Naive thymus-derived CD4-positive, alpha-beta T cell (primary cell): ENCODE measurements at regions of chr12 and their contacts with region 1.

Region 1: DNA sequence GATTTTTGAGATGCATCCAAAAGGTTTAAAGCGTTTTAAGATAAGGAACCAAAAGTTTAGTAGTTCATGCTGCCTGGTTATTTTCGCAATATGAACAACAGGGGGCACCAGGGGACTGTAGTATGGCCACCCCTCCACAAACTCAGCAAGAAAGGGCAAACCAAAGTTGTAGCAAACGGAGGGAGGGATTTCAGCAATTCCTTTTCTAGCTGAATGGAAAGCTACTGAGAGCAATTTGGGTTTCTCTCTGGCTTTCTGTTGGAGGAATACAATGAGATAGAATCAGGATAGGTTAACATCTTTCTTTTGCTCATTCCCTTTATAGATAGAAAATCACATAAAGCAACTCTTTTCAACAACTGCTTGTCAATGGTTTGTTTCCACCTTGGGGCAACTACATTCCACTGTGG is 62.5 kb downstream of the DRAM1 start:
- DNase-seq: peak in 8 of 9 donors; percentile 34 to 69 (median 56)
- ATAC-seq: peak; percentile 70
- H3K4me3 ChIP-seq: no peak overlapping the region
- H3K4me3 Mint-ChIP-seq: no peak overlapping the region
- H3K27ac ChIP-seq: no peak overlapping the region
- H3K27ac Mint-ChIP-seq: peak overlapping the region in 1 of 9 donors; percentile 32
- H3K4me1 ChIP-seq: no peaks in the 10 kb centered on the region
- H3K4me1 Mint-ChIP-seq: peaks cover 0 to 34% (median 0%) of the 10 kb centered on the region in 7 donors
- H3K27me3 ChIP-seq: no peaks in the 10 kb centered on the region
- H3K27me3 Mint-ChIP-seq: peaks cover 15 to 21% (median 19%) of the 10 kb centered on the region in 5 donors

Region 2: DNA sequence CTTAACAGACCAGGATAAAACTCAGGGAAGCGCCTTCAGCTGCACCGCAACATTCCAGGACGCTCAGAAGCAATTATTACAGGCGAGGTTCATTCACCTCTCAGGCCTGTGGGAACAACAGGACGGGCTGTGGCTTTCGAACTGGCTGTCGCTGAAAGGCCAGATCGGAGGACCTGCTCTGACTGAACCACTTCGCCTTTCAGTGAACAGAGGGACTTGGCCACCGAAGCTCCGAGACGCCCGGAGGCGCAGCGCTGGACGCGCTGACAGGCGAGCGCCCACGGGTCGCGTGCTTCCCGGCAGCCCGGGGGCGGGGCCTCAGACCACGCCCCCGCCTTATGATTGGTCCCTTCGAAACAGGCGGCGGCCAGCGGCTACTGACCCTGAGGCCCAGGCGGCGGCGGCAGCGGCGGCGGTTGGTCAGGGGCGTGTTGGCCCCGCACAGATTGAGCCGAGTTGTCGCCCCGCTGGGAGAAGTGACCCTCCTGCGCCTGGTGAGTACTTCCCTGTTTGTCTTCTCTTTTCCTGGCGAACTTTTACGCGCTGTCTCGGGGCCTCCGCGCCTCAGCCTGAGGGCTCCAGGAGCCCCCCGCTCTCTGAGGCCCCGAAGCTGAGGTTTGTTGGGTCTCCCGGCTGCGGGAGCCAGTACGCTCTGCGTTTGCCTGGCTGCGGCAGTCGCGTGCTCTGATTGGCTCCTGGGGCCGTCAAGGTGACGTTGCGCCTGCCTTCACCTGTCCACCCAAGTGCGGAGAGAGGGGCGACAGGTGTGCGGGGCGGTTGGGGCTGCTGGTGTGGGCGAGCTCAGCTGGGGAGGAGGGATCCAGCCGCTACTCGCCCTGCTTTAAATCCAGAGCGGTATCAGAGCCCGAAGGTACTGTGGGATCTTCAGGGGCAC is 1366.3 kb before region 1 on chr12 and contains the start of gene GAS2L3:
- CTCF ChIA-PET with region 1: no interaction called
- POLR2A ChIA-PET with region 1: no interaction called
- intact Hi-C with region 1: no loop called
- DNase-seq: peak in 8 of 9 donors; percentile 5 to 80 (median 22)
- ATAC-seq: peak; percentile 91
- H3K4me3 ChIP-seq: peak within 1 kb of the TSS; percentile 65
- H3K4me3 Mint-ChIP-seq: peak within 1 kb of the TSS; percentile 80 to 93 (median 90)
- H3K27ac ChIP-seq: no peak within 1 kb of the TSS
- H3K27ac Mint-ChIP-seq: peak within 1 kb of the TSS in 1 of 9 donors; percentile 87
- H3K4me1 ChIP-seq: peaks cover 0 to 4% of the 10 kb centered on the region in 2 donors
- H3K4me1 Mint-ChIP-seq: peaks cover 7 to 15% (median 11%) of the 10 kb centered on the region in 7 donors
- H3K27me3 ChIP-seq: no peaks in the 10 kb centered on the region
- H3K27me3 Mint-ChIP-seq: peaks cover 15 to 44% (median 30%) of the 10 kb centered on the region in 5 donors
- total RNA-seq, gene GAS2L3: 0.08 to 4.9 (median 0.16) TPM

Region 3: GRCh38 chr12:102043928-102044327 is 104.1 kb after region 1 on chr12:
- CTCF ChIA-PET with region 1: no interaction called
- POLR2A ChIA-PET with region 1: no interaction called
- intact Hi-C with region 1: loop called in 1 of 2 experiments (anchors 5 kb)
- DNase-seq: peak in 8 of 9 donors; percentile 26 to 62 (median 42)
- ATAC-seq: peak; percentile 83
- H3K4me3 ChIP-seq: no peak overlapping the region
- H3K4me3 Mint-ChIP-seq: peak overlapping the region in 9 of 10 donors; percentile 22 to 79 (median 48)
- H3K27ac ChIP-seq: peak overlapping the region; percentile 42
- H3K27ac Mint-ChIP-seq: peak overlapping the region; percentile 16 to 85 (median 50)
- H3K4me1 ChIP-seq: peaks cover 0 to 12% of the 10 kb centered on the region in 2 donors
- H3K4me1 Mint-ChIP-seq: peaks cover 3 to 20% (median 16%) of the 10 kb centered on the region in 7 donors
- H3K27me3 ChIP-seq: no peaks in the 10 kb centered on the region
- H3K27me3 Mint-ChIP-seq: no peaks in the 10 kb centered on the region

Region 4: GRCh38 chr12:102119674-102120563 is 180.1 kb after region 1 on chr12 and contains the starts of genes NUP37 and PARPBP:
- CTCF ChIA-PET with region 1: no interaction called
- POLR2A ChIA-PET with region 1: no interaction called
- intact Hi-C with region 1: loop called in 1 of 2 experiments (anchors 2 kb)
- DNase-seq: peak; percentile 87 to 94 (median 91)
- ATAC-seq: peak; percentile 98
- H3K4me3 ChIP-seq: peak within 1 kb of the TSS; percentile 93
- H3K4me3 Mint-ChIP-seq: peak within 1 kb of the TSS; percentile 88 to 98 (median 93)
- H3K27ac ChIP-seq: peak within 1 kb of the TSS; percentile 91
- H3K27ac Mint-ChIP-seq: peak within 1 kb of the TSS; percentile 86 to 97 (median 92)
- H3K4me1 ChIP-seq: peaks cover 9 to 14% of the 10 kb centered on the region in 2 donors
- H3K4me1 Mint-ChIP-seq: peaks cover 14 to 49% (median 27%) of the 10 kb centered on the region in 7 donors
- H3K27me3 ChIP-seq: no peaks in the 10 kb centered on the region
- H3K27me3 Mint-ChIP-seq: no peaks in the 10 kb centered on the region
- total RNA-seq, gene NUP37: 11.9 to 47.5 (median 18.5) TPM
- total RNA-seq, gene PARPBP: 1.1 to 21.5 (median 1.5) TPM

Region 5: GRCh38 chr12:102300824-102301461 is 361.1 kb after region 1 on chr12:
- CTCF ChIA-PET with region 1: no interaction called
- POLR2A ChIA-PET with region 1: no interaction called
- intact Hi-C with region 1: loop called in 1 of 2 experiments (anchors 1 kb)
- DNase-seq: peak in 1 of 9 donors; percentile 24
- ATAC-seq: peak; percentile 27
- H3K4me3 ChIP-seq: no peak overlapping the region
- H3K4me3 Mint-ChIP-seq: no peak overlapping the region
- H3K27ac ChIP-seq: no peak overlapping the region
- H3K27ac Mint-ChIP-seq: no peak overlapping the region
- H3K4me1 ChIP-seq: no peaks in the 10 kb centered on the region
- H3K4me1 Mint-ChIP-seq: peaks cover 0 to 14% (median 0%) of the 10 kb centered on the region in 7 donors
- H3K27me3 ChIP-seq: no peaks in the 10 kb centered on the region
- H3K27me3 Mint-ChIP-seq: peaks cover 0 to 30% (median 4%) of the 10 kb centered on the region in 5 donors

Region 6: GRCh38 chr12:102543494-102544485 is 603.9 kb after region 1 on chr12:
- CTCF ChIA-PET with region 1: no interaction called
- POLR2A ChIA-PET with region 1: no interaction called
- intact Hi-C with region 1: loop called in 1 of 2 experiments (anchors 5 kb)
- DNase-seq: no peak
- ATAC-seq: no peak
- H3K4me3 ChIP-seq: no peak overlapping the region
- H3K4me3 Mint-ChIP-seq: no peak overlapping the region
- H3K27ac ChIP-seq: no peak overlapping the region
- H3K27ac Mint-ChIP-seq: no peak overlapping the region
- H3K4me1 ChIP-seq: no peaks in the 10 kb centered on the region
- H3K4me1 Mint-ChIP-seq: peaks cover 0 to 6% (median 0%) of the 10 kb centered on the region in 7 donors
- H3K27me3 ChIP-seq: no peaks in the 10 kb centered on the region
- H3K27me3 Mint-ChIP-seq: peaks cover 7 to 39% (median 16%) of the 10 kb centered on the region in 5 donors

Region 7: DNA sequence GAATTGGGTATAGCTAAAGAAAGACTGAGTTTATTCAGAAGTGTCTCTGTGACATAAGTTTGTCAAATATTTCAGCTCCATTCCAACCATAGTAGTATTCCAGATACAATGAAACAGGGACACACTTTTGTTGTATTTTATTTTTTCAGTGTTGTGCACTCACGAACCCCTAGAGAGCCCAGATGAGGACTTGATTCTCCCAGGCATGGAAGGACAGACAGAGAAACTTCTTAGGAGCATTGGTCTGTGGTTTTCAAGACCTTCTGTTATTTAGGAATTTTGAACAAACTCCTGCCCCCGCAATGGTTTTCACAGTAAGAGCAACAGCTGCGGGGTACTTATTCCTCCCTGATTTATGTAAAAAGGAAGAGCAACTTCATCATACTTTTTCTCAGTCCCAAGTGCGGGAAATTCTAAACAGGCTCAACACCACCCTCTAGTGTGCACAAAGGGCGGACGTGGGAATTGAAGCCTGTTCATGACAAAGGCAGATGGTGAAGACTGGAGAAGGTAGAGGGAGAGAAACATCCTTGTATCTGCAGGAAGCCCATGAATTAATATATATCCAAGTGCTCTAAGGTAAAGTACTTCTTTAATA is 829.6 kb after region 1 on chr12:
- CTCF ChIA-PET with region 1: no interaction called
- POLR2A ChIA-PET with region 1: no interaction called
- intact Hi-C with region 1: loop called in 1 of 2 experiments (anchors 1 kb)
- DNase-seq: peak in 2 of 9 donors; percentile 5 to 31
- ATAC-seq: no peak
- H3K4me3 ChIP-seq: no peak overlapping the region
- H3K4me3 Mint-ChIP-seq: no peak overlapping the region
- H3K27ac ChIP-seq: no peak overlapping the region
- H3K27ac Mint-ChIP-seq: no peak overlapping the region
- H3K4me1 ChIP-seq: no peaks in the 10 kb centered on the region
- H3K4me1 Mint-ChIP-seq: peaks cover 0 to 2% (median 0%) of the 10 kb centered on the region in 7 donors
- H3K27me3 ChIP-seq: no peaks in the 10 kb centered on the region
- H3K27me3 Mint-ChIP-seq: peaks cover 9 to 23% (median 15%) of the 10 kb centered on the region in 5 donors